Activated CD4-positive, alpha-beta memory T cell treated with anti-CD3 and anti-CD28 coated beads for 36 hours (primary cell): ENCODE measurements at regions of chr5 and their contacts with region 1.

Region 1: DNA sequence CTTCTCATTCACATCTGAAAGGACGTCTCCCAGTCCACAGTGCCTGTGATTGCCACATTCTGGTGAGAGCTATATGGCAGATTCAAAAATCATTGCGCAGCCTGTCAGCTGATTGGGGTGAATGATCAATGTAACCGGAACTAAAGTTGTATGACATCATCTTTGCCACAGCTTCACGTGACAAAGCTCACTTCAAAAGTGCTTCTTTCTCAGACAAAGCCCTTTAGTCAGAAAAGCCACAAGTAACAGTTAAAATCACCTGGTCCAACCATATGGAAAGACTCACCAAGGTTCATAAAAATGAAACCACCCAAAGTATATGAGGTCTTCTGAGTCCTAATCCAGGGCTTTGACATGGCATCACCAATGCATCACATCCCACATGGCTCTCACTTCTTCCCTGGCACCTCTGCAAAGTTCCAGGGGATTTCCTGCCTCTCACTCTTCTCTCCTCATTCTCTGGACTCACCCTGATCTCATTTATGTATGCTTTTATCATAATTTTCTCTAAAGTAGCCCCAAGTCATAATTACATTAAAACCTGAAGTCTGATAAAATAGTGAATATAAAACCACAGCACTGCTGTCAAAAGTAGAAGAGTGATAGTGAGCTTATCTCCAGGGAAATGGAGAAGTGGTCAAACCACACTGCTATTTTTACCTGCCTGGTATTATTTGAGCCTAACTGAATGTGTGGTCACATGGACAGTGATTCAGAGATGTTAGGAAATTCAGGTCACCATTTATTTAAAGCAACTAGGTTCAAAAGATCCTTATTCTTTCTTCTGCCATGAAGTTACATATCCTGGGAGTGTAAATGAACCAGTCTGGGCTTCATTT is 193.1 kb upstream of the PTGER4 start:
- DNase-seq: peak; percentile 77
- H3K4me3 Mint-ChIP-seq: peak overlapping the region; percentile 7
- H3K27ac Mint-ChIP-seq: peak overlapping the region; percentile 84
- H3K4me1 Mint-ChIP-seq: peaks cover 81% of the 10 kb centered on the region
- H3K27me3 Mint-ChIP-seq: no peaks in the 10 kb centered on the region

Region 2: GRCh38 chr5:39948867-39949468 is 537.7 kb before region 1 on chr5:
- CTCF ChIA-PET with region 1: interaction called, 3 read pairs
- POLR2A ChIA-PET with region 1: no interaction called
- intact Hi-C with region 1: loop called (anchors 2 kb)
- DNase-seq: peak; percentile 54
- H3K4me3 Mint-ChIP-seq: no peak overlapping the region
- H3K27ac Mint-ChIP-seq: peak overlapping the region; percentile 4
- H3K4me1 Mint-ChIP-seq: peaks cover 3% of the 10 kb centered on the region
- H3K27me3 Mint-ChIP-seq: no peaks in the 10 kb centered on the region

Region 3: DNA sequence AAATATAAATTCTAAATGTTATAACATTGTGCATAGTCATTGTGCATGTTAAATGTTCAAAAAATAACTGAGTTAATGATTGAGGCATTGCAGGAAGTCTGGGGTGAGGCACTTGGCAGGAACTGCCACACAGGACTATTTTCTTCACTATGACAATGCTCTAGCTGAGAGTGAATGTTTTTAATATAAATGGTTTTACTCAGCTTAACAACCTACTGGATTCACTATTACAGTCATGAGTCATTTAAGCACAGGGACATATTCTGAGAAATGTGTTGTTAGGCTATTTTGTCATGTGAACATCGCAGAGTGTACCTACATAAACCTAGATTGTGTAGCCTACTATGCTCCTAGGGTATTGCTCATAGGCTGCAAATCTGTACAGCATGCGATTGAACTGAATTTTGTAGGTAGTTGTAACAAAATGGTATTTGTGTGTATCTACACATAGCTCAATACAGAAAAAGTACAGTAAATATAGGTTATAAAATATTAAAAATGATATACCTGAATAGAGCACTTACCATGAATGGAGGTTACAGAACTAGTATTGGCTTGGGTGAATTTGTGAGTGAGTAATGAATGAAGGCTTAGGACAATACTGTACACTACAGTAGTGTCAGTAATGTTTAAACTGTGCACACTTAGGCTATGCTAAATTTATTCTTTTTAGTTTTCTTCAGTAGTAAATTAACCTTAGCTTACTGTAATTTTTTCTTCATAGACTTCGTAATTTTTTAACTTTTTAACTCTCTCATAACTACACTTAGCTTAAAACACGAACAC is 153.0 kb before region 1 on chr5:
- CTCF ChIA-PET with region 1: no interaction called
- POLR2A ChIA-PET with region 1: no interaction called
- intact Hi-C with region 1: loop called (anchors 1 kb)
- DNase-seq: peak; percentile 56
- H3K4me3 Mint-ChIP-seq: no peak overlapping the region
- H3K27ac Mint-ChIP-seq: peak overlapping the region; percentile 33
- H3K4me1 Mint-ChIP-seq: peaks cover 50% of the 10 kb centered on the region
- H3K27me3 Mint-ChIP-seq: no peaks in the 10 kb centered on the region

Region 4: DNA sequence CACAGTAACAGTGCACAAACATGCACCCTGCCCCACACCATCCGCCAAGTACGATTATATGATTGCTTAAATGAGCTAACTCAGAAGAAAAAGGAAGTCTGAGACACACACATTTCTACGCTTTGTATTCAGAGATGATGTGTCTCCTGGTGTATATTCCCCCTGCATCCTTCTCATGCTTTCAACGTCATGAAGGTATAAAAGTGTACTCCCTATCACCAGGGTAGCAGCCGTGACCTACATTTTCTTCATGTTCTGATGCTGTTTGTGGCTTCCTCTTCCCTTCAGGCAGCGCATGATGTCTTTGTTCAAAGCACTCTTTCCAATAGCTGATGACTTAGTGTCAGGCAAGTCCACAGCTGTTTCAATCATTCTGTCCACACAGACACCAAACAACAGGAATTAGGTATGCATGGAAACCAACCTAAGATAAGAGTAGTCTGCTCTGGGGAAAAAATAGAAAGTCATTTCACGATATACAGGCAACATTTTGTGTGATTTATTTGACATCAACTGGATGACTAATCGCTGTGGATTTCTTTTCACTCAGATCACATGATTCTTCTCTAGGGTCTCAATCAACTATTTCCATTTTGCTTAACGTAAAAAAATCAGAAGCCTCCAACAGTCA is 76.3 kb before region 1 on chr5:
- CTCF ChIA-PET with region 1: interaction called, 6 read pairs
- POLR2A ChIA-PET with region 1: interaction called, 17 read pairs
- intact Hi-C with region 1: loop called (anchors 1 kb)
- DNase-seq: peak; percentile 82
- H3K4me3 Mint-ChIP-seq: peak overlapping the region; percentile 62
- H3K27ac Mint-ChIP-seq: peak overlapping the region; percentile 99
- H3K4me1 Mint-ChIP-seq: peaks cover 64% of the 10 kb centered on the region
- H3K27me3 Mint-ChIP-seq: no peaks in the 10 kb centered on the region

Region 5: DNA sequence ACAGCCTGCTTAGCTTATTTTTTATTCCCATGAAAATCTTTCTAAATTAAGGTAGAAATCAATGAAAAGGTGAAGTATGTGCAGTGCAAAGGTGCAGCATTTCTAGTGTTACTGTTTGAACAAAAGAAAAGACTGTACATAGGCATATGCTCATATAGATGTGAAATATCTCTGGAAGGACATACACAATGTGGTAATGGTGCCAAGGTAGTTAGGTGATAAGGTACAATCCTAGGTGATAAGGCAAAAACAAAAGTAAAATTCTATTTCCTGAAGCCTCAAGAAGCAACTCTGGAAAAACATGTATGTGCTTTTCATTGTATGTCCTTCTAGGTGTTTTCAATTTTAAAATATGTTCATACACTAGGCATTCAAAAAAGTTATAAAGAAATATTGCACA is 53.6 kb after region 1 on chr5:
- CTCF ChIA-PET with region 1: no interaction called
- POLR2A ChIA-PET with region 1: no interaction called
- intact Hi-C with region 1: no loop called
- DNase-seq: no peak
- H3K4me3 Mint-ChIP-seq: no peak overlapping the region
- H3K27ac Mint-ChIP-seq: no peak overlapping the region
- H3K4me1 Mint-ChIP-seq: no peaks in the 10 kb centered on the region
- H3K27me3 Mint-ChIP-seq: no peaks in the 10 kb centered on the region

Region 6: GRCh38 chr5:40578501-40579451 is 92.1 kb after region 1 on chr5:
- CTCF ChIA-PET with region 1: no interaction called
- POLR2A ChIA-PET with region 1: interaction called, 3 read pairs
- intact Hi-C with region 1: loop called (anchors 1 kb)
- DNase-seq: peak; percentile 86
- H3K4me3 Mint-ChIP-seq: peak overlapping the region; percentile 48
- H3K27ac Mint-ChIP-seq: peak overlapping the region; percentile 66
- H3K4me1 Mint-ChIP-seq: peaks cover 38% of the 10 kb centered on the region
- H3K27me3 Mint-ChIP-seq: no peaks in the 10 kb centered on the region

Region 7: GRCh38 chr5:40736103-40736875 is 249.6 kb after region 1 on chr5:
- CTCF ChIA-PET with region 1: no interaction called
- POLR2A ChIA-PET with region 1: no interaction called
- intact Hi-C with region 1: loop called (anchors 5 kb)
- DNase-seq: no peak
- H3K4me3 Mint-ChIP-seq: no peak overlapping the region
- H3K27ac Mint-ChIP-seq: no peak overlapping the region
- H3K4me1 Mint-ChIP-seq: peaks cover 23% of the 10 kb centered on the region
- H3K27me3 Mint-ChIP-seq: no peaks in the 10 kb centered on the region